Sigmoid colon (tissue), 7 donors: ENCODE measurements at regions of chr17 and their contacts with region 1.

Region 1: GRCh38 chr17:16380640-16381495 is at the start of gene UBB:
- DNase-seq: peak; percentile 99
- H3K4me3 ChIP-seq: peak within 1 kb of the TSS; percentile 56 to 77 (median 64)
- H3K27ac ChIP-seq: peak within 1 kb of the TSS; percentile 86 to 95 (median 93)
- H3K4me1 ChIP-seq: peaks cover 3 to 31% (median 25%) of the 10 kb centered on the region in 4 donors
- H3K27me3 ChIP-seq: no peaks in the 10 kb centered on the region
- CTCF ChIP-seq: no peak
- EP300 ChIP-seq: peak in 2 of 4 donors; percentile 64 to 77
- POLR2A ChIP-seq: peak; percentile 98
- total RNA-seq, gene UBB: 892 to 1,272 (median 1,168) TPM

Region 2: DNA sequence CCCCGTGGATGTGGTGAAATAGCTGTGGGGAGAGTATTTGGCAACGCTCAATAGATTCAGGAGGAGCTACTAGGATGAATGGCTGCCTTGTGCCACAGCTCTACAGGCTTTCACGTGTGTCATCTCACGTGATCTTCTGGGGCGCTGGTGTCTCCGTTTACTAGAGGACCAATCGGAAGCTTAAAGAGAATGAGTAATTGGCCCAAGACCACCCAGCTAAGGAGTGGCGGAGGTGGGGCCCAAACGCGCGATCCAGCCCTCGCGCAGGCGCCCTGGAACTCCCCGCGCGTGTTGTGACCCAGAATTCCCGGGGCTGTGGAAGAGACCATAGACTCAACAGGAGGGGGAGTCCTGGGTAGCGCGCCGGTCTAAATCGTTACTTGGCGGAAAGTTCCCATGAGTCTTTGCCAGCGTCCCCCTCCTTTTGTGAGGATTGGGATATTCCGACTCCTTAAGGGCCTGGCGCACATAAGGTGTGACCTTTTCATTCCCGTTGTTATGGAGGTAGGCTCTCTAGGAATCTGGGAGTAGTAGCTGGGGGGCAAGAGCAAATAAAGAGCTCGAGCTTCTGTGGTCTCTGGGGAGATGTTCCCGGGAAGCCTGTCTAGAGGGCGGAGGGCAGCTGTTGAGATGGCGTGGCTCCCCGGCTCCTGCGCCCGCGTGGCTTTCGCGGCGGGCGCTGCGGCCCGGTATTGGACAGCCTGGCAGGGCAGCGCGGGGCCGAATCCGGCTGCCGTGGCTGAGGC is 57.9 kb after region 1 on chr17:
- intact Hi-C with region 1: loop called (anchors 2 kb)
- DNase-seq: peak; percentile 99
- H3K4me3 ChIP-seq: peak overlapping the region; percentile 68 to 99 (median 84)
- H3K27ac ChIP-seq: peak overlapping the region; percentile 76 to 91 (median 86)
- H3K4me1 ChIP-seq: peaks cover 0 to 47% (median 37%) of the 10 kb centered on the region in 4 donors
- H3K27me3 ChIP-seq: no peaks in the 10 kb centered on the region
- CTCF ChIP-seq: no peak
- EP300 ChIP-seq: peak in 1 of 4 donors; percentile 44
- POLR2A ChIP-seq: peak in 1 of 2 donors; percentile 75

Region 3: DNA sequence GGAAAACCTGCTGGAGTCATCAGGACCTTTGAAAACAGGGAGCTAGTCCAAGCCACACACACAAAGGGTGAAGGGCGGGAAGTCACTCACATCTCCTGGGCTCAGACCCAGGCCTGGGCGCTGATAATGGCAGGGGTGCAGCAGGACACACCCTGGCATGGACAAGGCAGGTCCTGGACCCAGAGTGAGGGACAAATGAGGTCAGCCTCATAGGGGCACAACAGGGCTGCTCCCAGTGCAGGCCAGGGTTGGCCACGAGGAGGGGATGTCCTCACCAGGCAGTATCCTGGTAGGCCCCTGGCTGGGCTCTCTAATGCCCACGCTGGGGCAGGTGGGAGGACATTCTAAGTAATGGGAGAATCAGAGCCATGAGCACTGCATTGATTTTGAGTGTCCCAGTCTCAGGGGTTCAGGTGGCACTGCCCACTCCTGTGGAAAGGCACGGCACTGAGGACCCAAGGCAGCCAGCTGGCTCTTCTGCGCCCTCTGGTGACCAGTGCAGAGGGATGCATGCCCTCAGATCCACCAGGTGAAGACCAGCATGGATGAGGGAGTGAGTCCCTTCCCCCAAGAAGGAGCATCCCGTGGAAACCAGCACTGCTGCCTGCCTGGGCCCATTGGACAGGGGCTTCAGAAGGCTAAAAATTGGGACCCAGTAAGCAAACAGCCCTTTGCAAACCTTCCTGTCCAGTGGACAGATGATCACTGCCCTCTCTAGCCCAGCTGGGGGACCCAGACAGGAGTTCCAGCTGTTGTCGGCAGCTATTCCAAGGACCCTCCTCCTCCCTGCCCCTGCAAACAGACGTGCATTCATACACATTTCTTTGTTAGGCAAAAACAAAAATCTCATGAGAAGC is 1479.3 kb after region 1 on chr17:
- intact Hi-C with region 1: no loop called
- DNase-seq: peak; percentile 82
- H3K4me3 ChIP-seq: no peak overlapping the region
- H3K27ac ChIP-seq: peak overlapping the region in 2 of 4 donors; percentile 3 to 7
- H3K4me1 ChIP-seq: peaks cover 0 to 20% (median 8%) of the 10 kb centered on the region in 4 donors
- H3K27me3 ChIP-seq: no peaks in the 10 kb centered on the region
- CTCF ChIP-seq: peak; percentile 91 to 98 (median 96)
- EP300 ChIP-seq: no peak
- POLR2A ChIP-seq: no peak